HepG2 (cell line): ENCODE measurements at regions of chr18 and their contacts with region 1.

Region 1: DNA sequence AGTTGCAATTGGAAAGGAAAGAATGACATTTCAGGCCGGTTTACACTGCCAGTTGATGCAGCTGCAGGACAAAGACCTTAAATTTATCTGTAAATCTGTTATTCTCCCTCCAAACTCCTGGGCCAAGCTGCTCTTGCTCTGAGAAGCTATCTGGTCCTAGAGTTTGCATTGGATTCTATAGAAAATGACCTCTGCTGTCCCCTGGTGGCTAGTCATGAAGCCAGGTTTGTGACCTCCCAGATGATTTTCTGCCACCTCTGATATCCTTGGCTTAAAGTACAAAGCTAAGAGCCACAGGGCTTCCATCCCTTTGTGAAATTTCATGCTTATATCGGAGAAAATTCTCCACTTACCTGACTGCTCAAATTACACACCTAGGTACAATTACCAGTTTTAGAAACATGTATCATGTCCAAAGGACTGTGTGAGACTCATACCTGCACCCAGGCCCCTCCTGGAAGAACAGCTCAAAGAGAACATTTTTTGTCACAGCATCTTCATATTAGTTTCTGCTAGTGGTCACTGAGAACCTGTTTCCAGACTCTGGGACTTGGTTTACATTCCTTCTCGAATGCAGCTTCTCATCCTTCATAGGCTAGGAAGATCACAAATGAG is 28.9 kb upstream of the IER3IP1 start:
- DNase-seq: peak; percentile 40
- ATAC-seq: peak; percentile 82
- H3K4me3 ChIP-seq: no peak overlapping the region
- H3K27ac ChIP-seq: no peak overlapping the region
- H3K4me1 ChIP-seq: no peaks in the 10 kb centered on the region
- H3K27me3 ChIP-seq: peaks cover 0 to 3% of the 10 kb centered on the region in 2 experiments; a peak in 1 of 5 replicates
- CTCF ChIP-seq: peak; percentile 79
- EP300 ChIP-seq: no peak
- POLR2A ChIP-seq: no peak
- RAD21 ChIP-seq: peak; percentile 59; the same call in 1 of the 2 replicates

Region 2: GRCh38 chr18:47067648-47068047 is 137.4 kb before region 1 on chr18:
- CTCF ChIA-PET with region 1: no interaction called
- POLR2A ChIA-PET with region 1: no interaction called
- in situ Hi-C with region 1: no loop called
- intact Hi-C with region 1: no loop called
- DNase-seq: no peak
- ATAC-seq: no peak
- H3K4me3 ChIP-seq: no peak overlapping the region
- H3K27ac ChIP-seq: no peak overlapping the region
- H3K4me1 ChIP-seq: no peaks in the 10 kb centered on the region
- H3K27me3 ChIP-seq: no peaks in the 10 kb centered on the region
- CTCF ChIP-seq: no peak
- EP300 ChIP-seq: no peak
- POLR2A ChIP-seq: no peak
- RAD21 ChIP-seq: no peak

Region 3: DNA sequence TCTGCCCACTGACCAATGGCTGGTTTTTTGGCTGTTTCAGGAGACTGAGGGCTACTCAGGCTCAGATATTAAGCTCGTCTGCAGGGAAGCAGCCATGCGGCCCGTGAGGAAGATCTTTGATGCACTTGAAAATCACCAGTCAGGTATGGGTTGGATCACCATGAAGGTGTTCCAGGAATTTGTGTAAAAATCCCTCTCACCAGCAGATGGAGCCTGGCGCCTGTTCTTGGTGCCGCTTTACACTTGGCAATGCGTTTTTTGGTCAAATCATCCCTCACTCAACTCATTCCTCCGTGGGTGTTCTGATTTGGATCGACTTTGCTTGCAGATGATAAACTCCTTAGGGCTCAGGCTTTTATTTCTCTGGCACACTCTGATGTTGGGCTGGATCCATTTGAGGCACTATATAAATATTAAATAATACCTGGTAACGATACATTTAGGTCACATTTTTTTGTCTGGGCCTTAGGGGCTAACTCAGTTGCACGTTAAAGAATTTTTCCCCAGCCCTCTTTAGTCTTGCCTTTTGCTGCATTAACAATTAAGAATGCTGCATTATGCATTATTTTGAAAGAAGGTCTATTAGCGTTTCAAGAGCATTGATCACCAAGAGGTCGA is 104.7 kb before region 1 on chr18:
- CTCF ChIA-PET with region 1: interaction called, 50 read pairs
- POLR2A ChIA-PET with region 1: no interaction called
- in situ Hi-C with region 1: loop called (anchors 5 kb)
- intact Hi-C with region 1: loop called (anchors 1 kb)
- DNase-seq: peak; percentile 44
- ATAC-seq: peak; percentile 86
- H3K4me3 ChIP-seq: no peak overlapping the region
- H3K27ac ChIP-seq: no peak overlapping the region
- H3K4me1 ChIP-seq: peaks cover 18% of the 10 kb centered on the region
- H3K27me3 ChIP-seq: no peaks in the 10 kb centered on the region
- CTCF ChIP-seq: peak; percentile 81
- EP300 ChIP-seq: no peak
- POLR2A ChIP-seq: no peak
- RAD21 ChIP-seq: peak; percentile 79

Region 4: DNA sequence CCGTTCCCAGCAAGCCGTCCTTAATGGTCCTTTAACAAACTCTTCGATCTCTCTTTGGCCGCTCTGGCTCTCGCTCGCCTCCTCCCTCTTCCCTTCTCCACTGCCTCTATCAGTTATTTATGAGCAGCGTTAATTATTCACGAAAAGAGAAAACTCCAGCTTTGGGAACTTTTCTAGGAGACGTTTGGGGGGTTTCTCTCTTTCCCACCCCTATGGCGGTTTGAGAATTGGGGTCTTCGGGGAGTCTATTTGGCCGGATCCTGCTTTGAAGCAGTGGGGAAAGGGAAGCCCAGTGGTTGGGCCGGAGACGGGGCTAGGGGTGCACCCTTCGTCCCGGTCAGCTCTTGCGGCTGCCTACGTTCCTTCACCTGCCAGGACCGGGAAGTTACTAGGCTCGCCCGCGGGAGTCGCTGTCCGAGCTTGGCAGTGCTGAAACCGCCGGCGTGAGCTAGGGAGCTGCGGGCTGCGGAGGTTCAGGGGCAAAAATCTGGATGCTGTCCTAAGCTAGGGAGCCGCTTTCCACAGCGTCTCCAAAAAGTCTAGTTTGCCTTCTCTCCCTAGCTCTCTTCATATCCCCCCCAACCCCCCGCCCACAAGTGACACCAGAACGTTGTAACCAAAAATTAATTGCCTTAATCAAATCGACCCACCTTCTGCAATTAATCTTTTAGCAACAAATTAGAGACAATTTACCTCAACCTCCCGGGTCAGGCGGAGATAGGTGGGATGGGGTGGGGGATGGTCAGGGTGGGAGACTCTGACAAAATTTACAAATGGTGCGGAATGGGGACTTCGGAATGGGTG is 55.3 kb after region 1 on chr18:
- CTCF ChIA-PET with region 1: no interaction called
- POLR2A ChIA-PET with region 1: no interaction called
- in situ Hi-C with region 1: no loop called
- intact Hi-C with region 1: no loop called
- DNase-seq: peak; percentile 5
- ATAC-seq: peak; percentile 88
- H3K4me3 ChIP-seq: no peak overlapping the region
- H3K27ac ChIP-seq: no peak overlapping the region
- H3K4me1 ChIP-seq: no peaks in the 10 kb centered on the region
- H3K27me3 ChIP-seq: peaks cover 1 to 13% of the 10 kb centered on the region in 2 experiments; a peak in 2 of 5 replicates
- CTCF ChIP-seq: no peak; the same call in 1 of the 2 replicates
- EP300 ChIP-seq: no peak
- POLR2A ChIP-seq: no peak
- RAD21 ChIP-seq: no peak